Mammary epithelial cell (primary cell): ENCODE measurements at regions of chr5 and their contacts with region 1.

Region 1: DNA sequence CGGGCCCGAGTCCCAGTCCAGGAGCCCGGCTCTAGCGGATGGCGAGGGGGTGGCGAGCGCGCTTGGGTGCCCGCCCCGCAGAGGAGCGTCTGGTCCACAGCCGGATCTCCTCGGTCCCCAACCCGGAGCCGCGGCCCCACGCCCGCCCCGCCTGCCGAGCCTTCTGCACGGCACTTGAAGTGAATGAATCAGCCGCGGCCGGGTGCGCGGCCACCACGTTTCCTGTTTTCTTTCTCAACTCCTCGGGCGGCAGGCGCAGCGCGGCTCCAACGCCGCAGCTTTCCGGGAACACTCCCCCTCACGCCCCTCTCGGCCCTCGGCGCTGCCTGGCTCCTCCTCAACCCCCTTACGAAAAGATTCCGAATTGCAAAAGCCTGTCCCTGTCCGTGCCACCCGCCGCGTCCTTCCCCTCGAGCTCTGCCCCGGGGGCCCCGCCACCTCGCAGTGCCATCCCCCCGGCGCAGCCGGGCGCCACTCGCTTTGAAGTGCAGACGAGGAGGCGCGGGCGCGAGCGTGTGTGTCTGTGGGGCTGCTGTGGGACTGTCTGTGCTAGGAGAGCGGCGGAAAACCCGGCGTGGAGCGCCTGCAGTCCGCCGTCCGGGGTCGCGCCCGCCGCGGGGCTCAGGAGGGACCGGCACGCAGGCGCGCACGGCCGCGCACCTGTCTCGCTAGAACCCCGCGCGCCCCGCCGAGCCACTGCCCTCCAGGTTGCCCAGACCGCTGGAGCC is 456.6 kb downstream of the RAB3C start:
- DNase-seq: peak; percentile 63
- H3K4me3 ChIP-seq: peak overlapping the region; percentile 58 to 80 (median 58)
- H3K27ac ChIP-seq: no peak overlapping the region
- H3K4me1 ChIP-seq: peaks cover 39% of the 10 kb centered on the region
- H3K27me3 ChIP-seq: no peaks in the 10 kb centered on the region
- CTCF ChIP-seq: no peak

Region 2: DNA sequence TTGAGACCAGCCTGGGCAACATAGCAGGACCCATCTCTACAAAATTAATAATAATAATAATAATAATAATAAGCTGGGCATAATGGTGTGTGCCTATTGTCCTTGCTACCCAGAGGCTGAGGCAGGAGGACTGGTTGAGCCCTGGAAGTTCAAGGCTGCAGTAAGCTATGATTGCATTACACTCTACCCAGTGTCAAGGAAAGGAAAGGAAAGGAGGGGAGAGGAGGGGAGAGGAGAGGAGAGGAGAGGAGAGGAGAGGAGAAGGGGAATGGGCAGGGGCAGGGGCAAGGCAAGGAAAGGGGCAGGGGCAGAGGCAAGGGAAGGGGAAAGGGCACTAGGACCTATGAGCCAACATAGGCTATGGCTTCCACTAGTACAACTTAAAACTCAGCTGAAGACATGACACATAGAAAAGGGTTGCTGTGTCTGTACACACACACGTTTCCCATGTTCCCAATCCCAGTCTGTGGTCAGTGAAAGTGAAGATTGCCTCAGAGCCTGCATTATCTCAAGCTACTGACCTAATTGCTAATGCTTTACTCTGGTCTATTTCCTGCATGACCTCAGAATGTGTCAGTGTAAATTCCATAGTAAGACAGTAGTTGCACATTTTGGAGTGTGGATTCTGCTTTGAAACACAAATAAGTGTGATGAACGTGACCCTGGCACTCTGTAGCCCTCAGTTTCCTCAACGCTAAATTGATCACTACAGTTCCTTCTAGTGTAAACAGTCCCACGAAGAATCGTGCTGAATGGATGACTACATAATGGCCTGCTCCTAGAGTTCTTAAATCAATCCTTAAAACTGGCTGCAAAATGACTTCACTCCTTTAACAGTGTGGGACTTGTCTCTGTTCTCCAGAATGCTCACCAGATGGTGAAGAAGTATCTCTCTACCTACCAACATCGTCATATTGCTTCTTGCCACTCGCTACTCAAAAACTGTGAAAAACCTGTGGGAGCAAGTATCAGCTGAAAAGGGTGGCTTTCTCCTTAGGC is 40.5 kb after region 1 on chr5:
- CTCF ChIA-PET with region 1: no interaction called
- dilution Hi-C with region 1: no loop called
- in situ Hi-C with region 1: no loop called
- intact Hi-C with region 1: loop called (anchors 1 kb)
- DNase-seq: peak; percentile 97
- H3K4me3 ChIP-seq: no peak overlapping the region
- H3K27ac ChIP-seq: no peak overlapping the region
- H3K4me1 ChIP-seq: peaks cover 11% of the 10 kb centered on the region
- H3K27me3 ChIP-seq: peaks cover 2% of the 10 kb centered on the region
- CTCF ChIP-seq: no peak

Region 3: DNA sequence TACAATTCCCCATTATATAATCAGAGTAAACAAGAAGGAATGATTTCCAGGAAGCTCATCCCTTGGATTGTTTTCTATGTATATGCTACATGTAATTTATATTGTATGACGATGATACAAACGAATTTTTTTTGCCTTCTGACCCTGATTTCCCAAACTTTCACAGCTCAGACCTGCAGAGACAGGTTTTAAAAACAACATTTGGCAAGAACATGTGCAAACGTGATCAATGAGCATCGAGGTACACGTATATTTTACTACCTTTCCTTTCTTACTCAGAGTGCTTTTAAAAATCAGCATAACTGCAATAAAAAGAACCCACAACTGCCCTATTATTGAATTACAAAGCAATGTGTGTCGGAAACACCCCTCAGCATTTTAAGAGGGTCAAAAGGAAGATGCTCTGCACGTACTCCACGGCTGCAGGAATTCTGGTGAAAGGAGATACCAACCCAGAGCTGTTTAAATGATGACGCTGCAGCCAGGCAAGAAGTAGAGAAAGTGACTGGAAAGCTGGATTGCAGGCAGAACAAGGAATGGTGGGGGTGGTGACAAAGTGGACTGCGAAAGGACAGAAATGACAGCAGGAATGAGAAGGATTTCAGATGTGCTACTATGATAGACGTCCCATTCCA is 76.9 kb after region 1 on chr5:
- CTCF ChIA-PET with region 1: no interaction called
- dilution Hi-C with region 1: no loop called
- in situ Hi-C with region 1: no loop called
- intact Hi-C with region 1: loop called (anchors 1 kb)
- DNase-seq: peak; percentile 65
- H3K4me3 ChIP-seq: peak overlapping the region in 1 of 3 experiments; percentile 9
- H3K27ac ChIP-seq: peak overlapping the region; percentile 43
- H3K4me1 ChIP-seq: peaks cover 16% of the 10 kb centered on the region
- H3K27me3 ChIP-seq: no peaks in the 10 kb centered on the region
- CTCF ChIP-seq: no peak

Region 4: GRCh38 chr5:59174248-59174844 is 134.9 kb after region 1 on chr5:
- CTCF ChIA-PET with region 1: no interaction called
- dilution Hi-C with region 1: no loop called
- in situ Hi-C with region 1: loop called (anchors 10 to 25 kb)
- intact Hi-C with region 1: loop called (anchors 1 kb)
- DNase-seq: peak; percentile 35
- H3K4me3 ChIP-seq: no peak overlapping the region
- H3K27ac ChIP-seq: no peak overlapping the region
- H3K4me1 ChIP-seq: no peaks in the 10 kb centered on the region
- H3K27me3 ChIP-seq: no peaks in the 10 kb centered on the region
- CTCF ChIP-seq: peak; percentile 91 to 93

Region 5: GRCh38 chr5:59367791-59368394 is 328.4 kb after region 1 on chr5:
- CTCF ChIA-PET with region 1: no interaction called
- dilution Hi-C with region 1: no loop called
- in situ Hi-C with region 1: loop called in 1 of 2 experiments (anchors 25 kb)
- intact Hi-C with region 1: no loop called
- DNase-seq: peak; percentile 44
- H3K4me3 ChIP-seq: no peak overlapping the region
- H3K27ac ChIP-seq: no peak overlapping the region
- H3K4me1 ChIP-seq: no peaks in the 10 kb centered on the region
- H3K27me3 ChIP-seq: no peaks in the 10 kb centered on the region
- CTCF ChIP-seq: peak; percentile 78 to 88